ENCODE measurements at regions of chr12 and their contacts with region 1.

Region 1: DNA sequence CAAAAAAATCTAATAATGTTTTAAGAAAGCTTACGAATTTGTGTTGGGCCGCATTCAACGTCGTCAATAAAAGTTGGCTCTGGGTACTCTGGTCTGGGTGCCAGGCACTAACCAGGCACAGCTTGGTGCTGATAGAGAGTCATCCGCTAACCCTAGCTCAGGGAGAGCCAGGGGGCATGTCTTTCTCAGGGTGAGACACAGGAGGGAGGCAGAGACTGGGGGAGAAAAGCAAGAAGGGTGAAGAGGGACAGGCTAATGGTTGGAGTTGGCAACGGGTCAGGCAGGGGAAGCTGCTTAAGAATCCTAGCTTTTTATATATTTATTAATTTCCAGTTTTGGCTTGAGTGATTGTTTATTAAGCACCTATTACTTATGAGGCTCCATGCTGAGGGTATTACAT is 105.0 kb downstream of the CMKLR1 start:
- DNase-seq: peak in 3 of 7 donors; percentile 10 to 52 (median 21)
- H3K4me3 ChIP-seq: no peak overlapping the region
- H3K27ac ChIP-seq: no peak overlapping the region
- H3K4me1 ChIP-seq: no peaks in the 10 kb centered on the region
- H3K27me3 ChIP-seq: no peaks in the 10 kb centered on the region
- CTCF ChIP-seq: peak in 4 of 6 experiments; percentile 17 to 40 (median 36)
- POLR2A ChIP-seq: no peak

Region 2: GRCh38 chr12:108457006-108457733 is 223.0 kb after region 1 on chr12:
- intact Hi-C with region 1: loop called in 1 of 2 experiments (anchors 10 kb)
- DNase-seq: peak in 5 of 7 donors; percentile 17 to 61 (median 30)
- H3K4me3 ChIP-seq: no peak overlapping the region
- H3K27ac ChIP-seq: no peak overlapping the region
- H3K4me1 ChIP-seq: no peaks in the 10 kb centered on the region
- H3K27me3 ChIP-seq: no peaks in the 10 kb centered on the region
- CTCF ChIP-seq: peak; percentile 40 to 71 (median 68)
- POLR2A ChIP-seq: no peak